CD8-positive, alpha-beta memory T cell (primary cell): ENCODE measurements at regions of chr15 and their contacts with region 1.

Region 1: DNA sequence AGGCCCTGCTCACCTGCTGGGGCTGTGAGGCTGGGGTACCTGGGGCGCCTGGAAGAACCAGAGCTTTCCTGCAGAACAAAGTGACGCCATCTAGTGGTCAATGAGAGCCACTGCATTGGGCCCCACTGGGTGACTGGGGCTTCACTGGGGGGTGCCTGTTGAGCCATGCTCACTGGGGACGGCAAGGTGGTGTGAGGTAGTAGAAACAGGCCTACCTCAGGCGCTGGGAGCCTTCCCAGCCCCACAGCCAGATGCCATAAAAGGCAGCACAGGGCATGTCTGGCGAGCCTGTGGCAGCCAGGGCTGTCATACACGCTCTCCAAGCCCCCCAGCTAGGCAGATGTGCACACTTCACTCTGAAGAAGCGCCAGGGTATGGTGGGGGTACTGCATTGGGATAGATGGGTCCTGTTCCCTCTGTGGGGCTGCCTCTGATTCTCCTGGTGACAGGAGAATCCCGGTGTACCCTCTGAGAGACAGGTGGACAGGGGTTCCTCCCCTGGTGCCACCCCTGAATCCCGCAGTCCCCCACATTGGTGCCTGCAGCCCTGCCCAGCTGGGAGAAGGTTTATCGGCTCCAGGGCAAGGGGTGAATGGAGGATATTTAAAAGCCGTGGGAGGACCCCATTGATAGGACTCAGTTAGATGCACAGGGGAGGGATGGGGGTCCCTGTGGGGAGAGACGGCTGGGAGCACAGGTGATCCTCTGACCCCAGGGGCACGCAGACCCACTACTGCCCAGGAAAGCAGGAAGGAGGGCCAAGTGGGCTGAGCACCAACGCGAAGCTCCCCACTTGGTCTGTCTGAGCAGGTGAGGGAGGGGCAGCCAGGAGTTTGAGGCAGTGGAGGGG is 178.8 kb downstream of the NSMCE3 start:
- DNase-seq: peak; percentile 28 to 71 (median 34)
- H3K4me3 ChIP-seq: no peak overlapping the region
- H3K4me3 Mint-ChIP-seq: peak overlapping the region in 6 of 7 donors; percentile 12 to 93 (median 76)
- H3K27ac ChIP-seq: no peak overlapping the region
- H3K27ac Mint-ChIP-seq: peak overlapping the region in 5 of 8 donors; percentile 22 to 85 (median 75)
- H3K4me1 ChIP-seq: peaks cover 18% of the 10 kb centered on the region
- H3K4me1 Mint-ChIP-seq: peaks cover 27 to 41% (median 34%) of the 10 kb centered on the region in 3 donors
- H3K27me3 ChIP-seq: no peaks in the 10 kb centered on the region
- H3K27me3 Mint-ChIP-seq: no peaks in the 10 kb centered on the region

Region 2: GRCh38 chr15:28873541-28874190 is 217.2 kb before region 1 on chr15:
- CTCF ChIA-PET with region 1: interaction called, 22 read pairs
- POLR2A ChIA-PET with region 1: no interaction called
- DNase-seq: peak in 3 of 5 donors; percentile 19 to 66 (median 56)
- H3K4me3 ChIP-seq: no peak overlapping the region
- H3K4me3 Mint-ChIP-seq: no peak overlapping the region
- H3K27ac ChIP-seq: no peak overlapping the region
- H3K27ac Mint-ChIP-seq: peak overlapping the region in 1 of 8 donors; percentile 19
- H3K4me1 ChIP-seq: peaks cover 9% of the 10 kb centered on the region
- H3K4me1 Mint-ChIP-seq: peaks cover 0 to 4% (median 0%) of the 10 kb centered on the region in 3 donors
- H3K27me3 ChIP-seq: no peaks in the 10 kb centered on the region
- H3K27me3 Mint-ChIP-seq: peaks cover 0 to 3% of the 10 kb centered on the region in 2 donors

Region 3: DNA sequence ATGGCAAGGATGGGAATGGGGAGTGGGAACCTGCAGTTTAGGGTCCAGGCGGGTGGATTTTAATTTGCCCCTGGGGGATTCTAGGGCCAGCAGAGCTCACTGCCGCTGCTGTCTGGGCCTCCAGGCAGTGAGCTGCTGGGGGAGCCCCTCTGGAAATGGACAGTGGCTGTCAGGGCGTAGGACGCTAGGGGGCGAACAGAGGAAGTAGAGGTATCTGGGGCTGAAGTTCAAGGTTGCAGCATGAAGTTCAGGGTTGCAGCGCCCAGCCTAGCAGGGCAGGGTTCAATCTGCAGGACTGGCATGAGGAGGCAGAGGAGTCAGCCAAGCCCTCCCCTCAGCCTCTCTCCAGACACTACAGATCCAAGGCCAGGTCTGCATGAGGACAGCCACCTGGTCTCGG is 155.5 kb before region 1 on chr15:
- CTCF ChIA-PET with region 1: interaction called, 12 read pairs
- POLR2A ChIA-PET with region 1: no interaction called
- DNase-seq: peak in 4 of 5 donors; percentile 12 to 77 (median 50)
- H3K4me3 ChIP-seq: no peak overlapping the region
- H3K4me3 Mint-ChIP-seq: peak overlapping the region in 5 of 7 donors; percentile 4 to 81 (median 66)
- H3K27ac ChIP-seq: no peak overlapping the region
- H3K27ac Mint-ChIP-seq: peak overlapping the region in 6 of 8 donors; percentile 1 to 93 (median 78)
- H3K4me1 ChIP-seq: peaks cover 73% of the 10 kb centered on the region
- H3K4me1 Mint-ChIP-seq: peaks cover 47 to 82% (median 61%) of the 10 kb centered on the region in 3 donors
- H3K27me3 ChIP-seq: no peaks in the 10 kb centered on the region
- H3K27me3 Mint-ChIP-seq: peaks cover 0 to 4% of the 10 kb centered on the region in 2 donors

Region 4: GRCh38 chr15:28975766-28976179 is 115.1 kb before region 1 on chr15:
- CTCF ChIA-PET with region 1: interaction called, 13 read pairs
- POLR2A ChIA-PET with region 1: no interaction called
- DNase-seq: peak; percentile 37 to 78 (median 61)
- H3K4me3 ChIP-seq: no peak overlapping the region
- H3K4me3 Mint-ChIP-seq: no peak overlapping the region
- H3K27ac ChIP-seq: no peak overlapping the region
- H3K27ac Mint-ChIP-seq: peak overlapping the region in 3 of 8 donors; percentile 40 to 49 (median 49)
- H3K4me1 ChIP-seq: peaks cover 8% of the 10 kb centered on the region
- H3K4me1 Mint-ChIP-seq: peaks cover 14 to 54% (median 14%) of the 10 kb centered on the region in 3 donors
- H3K27me3 ChIP-seq: no peaks in the 10 kb centered on the region
- H3K27me3 Mint-ChIP-seq: no peaks in the 10 kb centered on the region

Region 5: GRCh38 chr15:29103824-29104565 is 13.2 kb after region 1 on chr15:
- CTCF ChIA-PET with region 1: interaction called, 19 read pairs
- POLR2A ChIA-PET with region 1: no interaction called
- DNase-seq: peak in 4 of 5 donors; percentile 24 to 55 (median 40)
- H3K4me3 ChIP-seq: no peak overlapping the region
- H3K4me3 Mint-ChIP-seq: peak overlapping the region in 1 of 7 donors; percentile 11
- H3K27ac ChIP-seq: no peak overlapping the region
- H3K27ac Mint-ChIP-seq: no peak overlapping the region
- H3K4me1 ChIP-seq: no peaks in the 10 kb centered on the region
- H3K4me1 Mint-ChIP-seq: peaks cover 7 to 9% (median 8%) of the 10 kb centered on the region in 3 donors
- H3K27me3 ChIP-seq: no peaks in the 10 kb centered on the region
- H3K27me3 Mint-ChIP-seq: no peaks in the 10 kb centered on the region

Region 6: DNA sequence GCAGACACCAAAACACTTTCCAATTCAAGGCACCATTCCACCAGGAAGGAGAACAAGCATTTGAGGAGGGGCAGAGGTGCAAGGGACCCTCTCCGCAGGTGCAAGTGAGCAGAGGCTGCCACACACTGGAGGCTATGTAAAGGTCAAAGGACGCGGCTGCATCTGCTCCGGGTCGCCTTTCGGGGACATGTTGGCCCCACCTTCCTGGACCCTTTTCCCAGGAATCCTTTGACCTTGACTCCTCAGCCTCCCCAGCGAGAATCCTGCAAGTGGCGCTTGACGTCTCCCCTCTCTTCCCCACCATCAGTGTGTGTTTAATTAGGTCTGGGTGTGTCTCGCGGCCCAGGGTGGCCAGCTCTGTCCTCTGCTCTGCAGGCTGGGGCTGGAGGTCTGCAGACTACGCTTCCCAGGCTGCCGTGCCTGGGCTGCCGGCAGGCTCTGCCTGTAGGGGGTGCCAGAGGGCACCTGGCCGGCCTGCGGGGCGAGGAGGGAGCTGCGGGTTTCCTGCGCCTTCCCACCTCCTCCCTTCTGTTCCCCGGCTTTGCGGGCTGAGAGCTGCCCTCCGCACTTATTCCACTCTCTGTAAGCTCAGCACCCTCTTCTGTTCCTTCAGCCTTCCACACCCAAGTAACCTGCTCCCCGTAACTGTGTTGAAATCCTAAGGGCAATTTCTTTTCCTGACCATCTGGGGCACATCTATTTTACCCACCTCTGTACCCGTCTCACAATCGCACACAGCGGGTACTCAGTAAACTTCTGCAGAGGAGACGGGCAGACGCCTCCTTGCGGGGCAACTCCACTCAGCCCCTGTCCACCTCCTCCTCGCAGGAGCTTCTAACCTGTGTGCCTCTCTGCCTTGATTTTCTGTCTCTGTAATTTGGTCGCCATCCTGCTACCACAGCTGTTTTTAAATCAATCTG is 49.0 kb after region 1 on chr15:
- CTCF ChIA-PET with region 1: no interaction called
- POLR2A ChIA-PET with region 1: no interaction called
- DNase-seq: peak; percentile 12 to 62 (median 33)
- H3K4me3 ChIP-seq: no peak overlapping the region
- H3K4me3 Mint-ChIP-seq: peak overlapping the region in 3 of 7 donors; percentile 12 to 62 (median 35)
- H3K27ac ChIP-seq: no peak overlapping the region
- H3K27ac Mint-ChIP-seq: no peak overlapping the region
- H3K4me1 ChIP-seq: no peaks in the 10 kb centered on the region
- H3K4me1 Mint-ChIP-seq: peaks cover 10 to 12% (median 11%) of the 10 kb centered on the region in 3 donors
- H3K27me3 ChIP-seq: peaks cover 6% of the 10 kb centered on the region
- H3K27me3 Mint-ChIP-seq: peaks cover 25 to 64% of the 10 kb centered on the region in 2 donors